Activated B cell treated with CpG ODN at 0.5 μM for 24 hours (primary cell): ENCODE measurements at regions of chr12 and their contacts with region 1.

Region 1: DNA sequence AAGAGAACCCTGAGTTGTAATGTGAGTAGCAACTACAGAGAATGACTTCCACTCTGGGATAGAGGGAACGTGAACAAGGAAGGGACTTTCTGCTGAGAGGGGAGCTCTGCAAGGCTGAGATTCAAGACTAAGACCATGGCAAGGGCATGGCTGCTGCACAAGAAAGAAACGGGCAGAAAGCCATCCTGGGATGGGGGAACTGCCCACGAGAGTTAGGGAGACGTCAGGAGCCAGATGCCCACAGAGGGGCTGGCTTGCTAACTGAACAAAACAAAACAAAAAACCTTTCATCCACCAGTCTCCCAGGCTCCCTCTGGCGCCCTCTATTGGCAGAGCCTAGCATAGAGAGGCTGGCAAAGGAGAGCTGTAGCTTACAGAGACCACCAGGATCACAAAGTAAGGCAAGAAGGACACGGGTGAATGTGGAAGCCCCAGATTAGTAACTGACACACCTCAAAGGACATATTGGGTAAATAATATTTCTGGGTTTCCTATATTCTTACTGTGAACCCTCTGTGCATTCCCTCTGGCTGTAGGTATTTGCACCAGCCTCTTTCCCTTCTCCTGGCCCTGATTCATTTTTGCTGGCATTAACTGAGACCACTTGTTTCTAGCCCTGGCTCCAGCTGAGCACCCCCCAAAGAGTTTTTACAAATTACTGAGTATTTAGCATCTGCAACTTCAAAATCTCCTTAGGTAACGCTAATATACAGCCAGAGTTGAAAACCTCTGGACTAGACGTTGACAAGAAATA is 338.3 kb downstream of the EMP1 start:
- DNase-seq: peak; percentile 24
- ATAC-seq: no peak
- H3K4me3 Mint-ChIP-seq: no peak overlapping the region
- H3K27ac Mint-ChIP-seq: no peak overlapping the region
- H3K4me1 Mint-ChIP-seq: peaks cover 48% of the 10 kb centered on the region
- H3K27me3 Mint-ChIP-seq: no peaks in the 10 kb centered on the region
- CTCF ChIP-seq: no peak

Region 2: GRCh38 chr12:12813120-12814101 is 721.4 kb before region 1 on chr12 and contains the start of gene DDX47:
- CTCF ChIA-PET with region 1: no interaction called
- POLR2A ChIA-PET with region 1: no interaction called
- intact Hi-C with region 1: loop called (anchors 5 kb)
- DNase-seq: peak; percentile 98
- ATAC-seq: peak; percentile 81
- H3K4me3 Mint-ChIP-seq: peak within 1 kb of the TSS; percentile 96
- H3K27ac Mint-ChIP-seq: peak within 1 kb of the TSS; percentile 93
- H3K4me1 Mint-ChIP-seq: peaks cover 69% of the 10 kb centered on the region
- H3K27me3 Mint-ChIP-seq: no peaks in the 10 kb centered on the region
- CTCF ChIP-seq: peak; percentile 87
- total RNA-seq, gene DDX47: 97.1 and 98.5 TPM in 2 replicates

Region 3: GRCh38 chr12:12909228-12909994 is 625.4 kb before region 1 on chr12:
- CTCF ChIA-PET with region 1: no interaction called
- POLR2A ChIA-PET with region 1: no interaction called
- intact Hi-C with region 1: no loop called
- DNase-seq: no peak
- ATAC-seq: peak; percentile 70
- H3K4me3 Mint-ChIP-seq: peak overlapping the region; percentile 15
- H3K27ac Mint-ChIP-seq: no peak overlapping the region
- H3K4me1 Mint-ChIP-seq: peaks cover 20% of the 10 kb centered on the region
- H3K27me3 Mint-ChIP-seq: peaks cover 5% of the 10 kb centered on the region
- CTCF ChIP-seq: no peak

Region 4: DNA sequence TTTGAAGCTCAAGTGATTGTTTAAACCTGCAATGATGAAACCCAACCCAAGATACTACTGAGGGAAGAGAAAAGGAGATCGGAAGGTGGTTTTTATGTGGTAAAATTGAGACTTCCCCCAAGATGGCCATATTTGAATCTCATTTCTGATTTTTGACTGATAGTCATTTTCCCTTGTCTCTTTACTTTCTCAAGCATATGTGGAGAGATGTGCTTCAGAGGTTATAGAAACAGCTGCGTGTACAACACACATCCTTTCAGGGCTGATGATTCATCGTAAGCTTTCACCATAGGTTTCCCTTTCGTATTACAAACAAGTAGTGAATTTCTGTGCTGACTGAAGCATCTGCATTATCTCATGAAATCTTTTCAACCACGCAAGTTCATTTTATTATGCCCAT is 62.1 kb before region 1 on chr12:
- CTCF ChIA-PET with region 1: interaction called, 3 read pairs
- POLR2A ChIA-PET with region 1: interaction called, 6 read pairs
- intact Hi-C with region 1: loop called (anchors 2 kb)
- DNase-seq: no peak
- ATAC-seq: peak; percentile 91
- H3K4me3 Mint-ChIP-seq: no peak overlapping the region
- H3K27ac Mint-ChIP-seq: no peak overlapping the region
- H3K4me1 Mint-ChIP-seq: peaks cover 9% of the 10 kb centered on the region
- H3K27me3 Mint-ChIP-seq: no peaks in the 10 kb centered on the region
- CTCF ChIP-seq: no peak

Region 5: DNA sequence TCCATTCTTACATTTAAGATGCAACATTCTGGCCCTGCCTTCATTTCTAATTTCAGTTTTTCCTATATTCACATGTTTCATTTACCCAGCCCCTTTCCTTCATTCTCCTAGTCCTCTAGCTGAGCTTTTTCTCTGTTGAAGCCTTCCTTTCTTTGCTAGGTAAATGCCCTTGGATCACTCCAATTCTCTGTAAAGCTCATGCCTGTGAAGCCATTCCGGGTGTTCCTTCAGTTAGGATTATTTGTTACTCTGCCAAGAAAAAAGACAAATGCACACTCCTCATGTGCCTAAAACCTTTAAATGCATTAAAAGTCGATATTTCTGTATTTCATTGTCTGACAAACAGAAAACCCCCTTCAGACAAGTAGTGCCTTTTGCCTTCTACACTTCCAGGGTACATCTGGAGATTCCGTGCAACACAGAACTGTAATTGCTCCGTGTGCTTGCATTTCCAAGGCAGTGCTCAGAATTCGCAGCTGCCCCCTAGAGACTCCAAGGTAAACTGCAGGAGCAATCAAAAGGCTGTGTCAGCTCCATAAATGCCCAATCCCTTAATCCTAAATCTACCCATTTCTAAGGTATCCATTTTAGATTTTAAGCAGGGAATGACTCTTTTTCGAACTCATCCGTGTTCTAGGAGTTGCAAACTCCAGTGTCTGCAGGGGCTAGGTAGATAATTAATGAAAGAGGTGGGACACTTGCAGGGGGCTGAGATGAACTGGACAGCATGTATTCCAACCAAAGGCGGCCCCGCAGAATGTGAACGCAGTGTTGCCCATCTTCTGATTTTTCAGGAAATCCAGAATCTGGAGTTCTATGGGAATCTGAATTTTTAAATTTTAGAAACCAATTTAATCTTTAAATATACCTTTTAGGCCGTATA is 126.4 kb after region 1 on chr12:
- CTCF ChIA-PET with region 1: interaction called, 3 read pairs
- POLR2A ChIA-PET with region 1: no interaction called
- intact Hi-C with region 1: loop called (anchors 2 kb)
- DNase-seq: no peak
- ATAC-seq: peak; percentile 58
- H3K4me3 Mint-ChIP-seq: no peak overlapping the region
- H3K27ac Mint-ChIP-seq: no peak overlapping the region
- H3K4me1 Mint-ChIP-seq: no peaks in the 10 kb centered on the region
- H3K27me3 Mint-ChIP-seq: no peaks in the 10 kb centered on the region
- CTCF ChIP-seq: peak; percentile 68

Region 6: DNA sequence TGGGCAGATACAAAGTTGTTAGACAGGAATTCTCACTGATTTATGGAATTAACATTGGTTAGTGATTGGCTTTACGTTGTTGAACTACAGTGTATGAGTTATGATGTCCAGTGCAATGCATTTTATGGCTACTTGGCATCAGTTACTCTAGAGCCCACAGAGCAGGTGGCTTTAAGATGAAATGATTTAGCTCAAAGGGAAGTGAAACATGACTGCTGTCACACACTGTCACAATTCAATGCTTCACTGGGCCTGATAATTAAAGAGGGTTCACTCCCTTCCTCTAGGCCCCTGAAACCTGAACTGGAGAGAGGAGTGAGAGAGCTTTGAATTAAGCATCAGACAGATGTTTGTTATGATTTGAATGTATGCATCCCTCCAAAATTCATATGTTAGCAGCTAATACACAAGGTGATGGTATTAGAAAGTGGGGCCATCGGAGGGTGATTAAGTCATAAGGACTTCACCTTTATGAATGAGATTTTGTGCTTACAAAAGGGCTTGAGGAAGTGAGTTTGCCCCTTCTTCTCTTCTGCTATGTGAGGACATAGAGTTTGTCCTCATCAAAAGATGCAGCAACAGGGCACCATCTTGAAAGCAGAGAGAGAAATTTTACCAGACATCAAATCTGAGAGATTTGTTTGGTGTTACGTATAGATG is 622.4 kb after region 1 on chr12:
- CTCF ChIA-PET with region 1: no interaction called
- POLR2A ChIA-PET with region 1: no interaction called
- intact Hi-C with region 1: loop called (anchors 1 kb)
- DNase-seq: no peak
- ATAC-seq: peak; percentile 91
- H3K4me3 Mint-ChIP-seq: peak overlapping the region; percentile 62
- H3K27ac Mint-ChIP-seq: peak overlapping the region; percentile 97
- H3K4me1 Mint-ChIP-seq: peaks cover 71% of the 10 kb centered on the region
- H3K27me3 Mint-ChIP-seq: no peaks in the 10 kb centered on the region
- CTCF ChIP-seq: no peak